Right ventricle myocardium inferior (tissue), 1 donor: ENCODE measurements at regions of chr15 and their contacts with region 1.

Region 1: DNA sequence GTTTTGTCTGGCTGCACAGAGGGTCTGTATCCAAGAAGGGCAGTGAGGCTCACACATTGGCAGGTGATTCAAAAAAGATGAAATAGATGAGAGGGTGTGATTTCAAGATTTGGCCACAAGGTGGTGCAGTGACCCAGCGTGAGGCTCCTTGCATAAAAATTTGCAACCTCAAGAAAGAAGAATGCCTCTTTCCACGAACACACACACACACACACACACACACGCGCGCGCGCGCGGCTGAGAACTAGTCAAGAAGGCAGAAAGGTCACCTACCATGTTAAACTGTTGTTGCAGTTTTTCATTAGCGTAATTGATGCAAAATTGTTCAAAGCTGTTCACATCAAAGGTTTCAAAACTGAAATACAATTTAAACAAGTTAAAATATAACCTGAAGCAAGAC is 39.2 kb downstream of the MYO5C start:
- DNase-seq: no peak
- ATAC-seq: peak; percentile 50

Region 2: GRCh38 chr15:52318729-52319500 is 62.5 kb after region 1 on chr15:
- intact Hi-C with region 1: loop called (anchors 5 kb)
- DNase-seq: peak; percentile 78
- ATAC-seq: peak; percentile 87

Region 3: GRCh38 chr15:52466134-52466701 is 209.9 kb after region 1 on chr15:
- intact Hi-C with region 1: loop called (anchors 5 kb)
- DNase-seq: peak; percentile 72
- ATAC-seq: peak; percentile 89

Region 4: DNA sequence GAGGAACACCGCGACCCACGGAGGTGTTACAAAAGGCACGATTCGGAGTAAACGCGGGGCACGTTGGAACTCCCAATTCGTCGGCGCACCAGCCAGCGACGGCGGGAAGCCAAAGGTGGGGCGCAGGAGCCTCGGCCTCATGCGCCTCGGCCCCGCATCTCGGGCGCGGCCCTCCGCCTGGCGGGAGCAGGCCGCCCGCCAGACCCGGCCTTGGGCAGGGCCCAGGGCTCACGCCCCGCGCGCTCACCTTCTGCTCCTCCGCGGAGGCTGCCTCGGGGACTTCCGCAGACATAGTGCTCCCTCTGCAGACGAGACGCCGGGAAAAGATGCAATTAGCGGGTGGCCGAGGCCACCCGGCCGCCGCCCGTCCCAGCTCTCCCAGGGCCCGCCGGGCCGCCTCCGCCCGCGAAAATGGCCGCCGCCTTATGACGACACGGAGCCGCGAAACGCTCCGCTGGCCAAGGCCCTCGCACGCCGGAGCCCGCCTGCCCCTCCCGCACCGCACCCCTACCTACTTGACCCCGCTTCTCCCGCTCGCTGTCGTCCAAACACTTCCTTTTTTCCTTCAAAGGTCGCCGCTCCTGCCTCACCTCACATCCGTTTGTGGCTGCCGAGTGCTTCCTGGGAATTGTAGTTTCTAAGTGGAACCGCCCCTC is 312.4 kb after region 1 on chr15 and contains the start of gene ARPP19:
- intact Hi-C with region 1: loop called (anchors 5 kb)
- DNase-seq: peak; percentile 93
- ATAC-seq: peak; percentile 93
- total RNA-seq, gene ARPP19: 155 TPM

Region 5: DNA sequence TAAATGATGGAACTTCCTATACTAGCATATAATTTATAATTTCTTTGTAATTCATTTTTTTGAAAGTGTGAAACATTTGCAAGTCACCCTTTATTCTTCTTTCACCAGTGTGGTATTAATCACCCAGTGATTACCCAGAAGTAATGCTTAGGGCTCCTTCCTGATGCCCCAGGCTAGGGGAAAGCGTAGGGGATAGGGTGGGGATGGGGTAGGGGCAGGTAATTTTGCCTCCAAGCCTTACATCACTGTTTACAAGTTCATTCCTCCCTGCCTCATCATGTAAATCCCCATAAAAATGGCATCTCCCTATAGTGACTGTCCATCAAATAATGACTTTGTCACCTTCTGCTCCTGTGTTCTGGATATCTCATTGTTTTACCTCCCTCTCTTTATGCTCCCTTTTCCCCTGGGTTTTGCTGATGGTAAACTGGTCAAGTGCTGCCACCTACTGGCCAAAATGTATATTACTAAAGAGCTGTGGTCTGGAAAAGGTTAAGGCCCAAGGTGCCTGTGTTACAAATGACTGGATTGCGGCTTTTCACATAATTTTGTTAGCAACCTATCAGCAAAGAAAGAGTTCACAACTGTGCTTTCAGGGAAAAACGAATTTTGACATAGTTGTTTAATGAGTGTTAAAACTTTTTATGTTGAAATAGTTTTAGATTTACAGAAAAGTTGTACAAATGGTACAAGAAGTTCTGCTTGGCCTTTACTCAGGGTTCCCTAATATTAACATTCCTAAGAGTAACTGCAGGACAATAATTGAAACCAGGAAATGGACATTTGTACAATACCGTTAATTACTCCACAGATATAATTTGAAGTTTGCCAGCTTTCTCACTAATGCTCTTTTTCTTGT is 479.1 kb after region 1 on chr15:
- intact Hi-C with region 1: loop called (anchors 2 kb)
- DNase-seq: no peak
- ATAC-seq: peak; percentile 78